HCT116 (cell line): ENCODE measurements at regions of chr6 and their contacts with region 1.

Region 1: GRCh38 chr6:121055572-121056163 is 278.6 kb downstream of the TBC1D32 start:
- DNase-seq: peak; percentile 10
- ATAC-seq: peak; percentile 87
- H3K4me3 ChIP-seq: no peak overlapping the region
- H3K27ac ChIP-seq: no peak overlapping the region
- H3K4me1 ChIP-seq: no peaks in the 10 kb centered on the region
- H3K27me3 ChIP-seq: no peaks in the 10 kb centered on the region
- CTCF ChIP-seq: peak; percentile 64 to 74 (median 66)
- POLR2A ChIP-seq: no peak
- RAD21 ChIP-seq: peak; percentile 80

Region 2: GRCh38 chr6:120764318-120764717 is 291.4 kb before region 1 on chr6:
- CTCF ChIA-PET with region 1: no interaction called
- POLR2A ChIA-PET with region 1: no interaction called
- RAD21 ChIA-PET with region 1: no interaction called
- intact Hi-C with region 1: no loop called
- DNase-seq: no peak
- ATAC-seq: peak; percentile 65
- H3K4me3 ChIP-seq: no peak overlapping the region
- H3K27ac ChIP-seq: no peak overlapping the region
- H3K4me1 ChIP-seq: no peaks in the 10 kb centered on the region
- H3K27me3 ChIP-seq: no peaks in the 10 kb centered on the region
- CTCF ChIP-seq: peak in 1 of 3 experiments; percentile 29; a peak in 2 of 6 replicates
- POLR2A ChIP-seq: no peak
- RAD21 ChIP-seq: peak; percentile 37

Region 3: GRCh38 chr6:121222656-121223055 is 167.0 kb after region 1 on chr6:
- CTCF ChIA-PET with region 1: no interaction called
- POLR2A ChIA-PET with region 1: no interaction called
- RAD21 ChIA-PET with region 1: no interaction called
- intact Hi-C with region 1: loop called (anchors 5 kb)
- DNase-seq: no peak
- ATAC-seq: no peak; the same call in 1 of the 2 replicates
- H3K4me3 ChIP-seq: no peak overlapping the region
- H3K27ac ChIP-seq: no peak overlapping the region
- H3K4me1 ChIP-seq: no peaks in the 10 kb centered on the region
- H3K27me3 ChIP-seq: no peaks in the 10 kb centered on the region
- CTCF ChIP-seq: peak in 1 of 3 experiments; percentile 49; a peak in 2 of 6 replicates
- POLR2A ChIP-seq: no peak
- RAD21 ChIP-seq: peak; percentile 33; the same call in 1 of the 2 replicates

Region 4: GRCh38 chr6:121399966-121400365 is 344.3 kb after region 1 on chr6:
- CTCF ChIA-PET with region 1: interaction called, 7 read pairs
- POLR2A ChIA-PET with region 1: no interaction called
- RAD21 ChIA-PET with region 1: no interaction called
- intact Hi-C with region 1: loop called (anchors 2 kb)
- DNase-seq: no peak
- ATAC-seq: no peak
- H3K4me3 ChIP-seq: no peak overlapping the region
- H3K27ac ChIP-seq: no peak overlapping the region
- H3K4me1 ChIP-seq: no peaks in the 10 kb centered on the region
- H3K27me3 ChIP-seq: no peaks in the 10 kb centered on the region
- CTCF ChIP-seq: no peak
- POLR2A ChIP-seq: no peak
- RAD21 ChIP-seq: no peak

Region 5: DNA sequence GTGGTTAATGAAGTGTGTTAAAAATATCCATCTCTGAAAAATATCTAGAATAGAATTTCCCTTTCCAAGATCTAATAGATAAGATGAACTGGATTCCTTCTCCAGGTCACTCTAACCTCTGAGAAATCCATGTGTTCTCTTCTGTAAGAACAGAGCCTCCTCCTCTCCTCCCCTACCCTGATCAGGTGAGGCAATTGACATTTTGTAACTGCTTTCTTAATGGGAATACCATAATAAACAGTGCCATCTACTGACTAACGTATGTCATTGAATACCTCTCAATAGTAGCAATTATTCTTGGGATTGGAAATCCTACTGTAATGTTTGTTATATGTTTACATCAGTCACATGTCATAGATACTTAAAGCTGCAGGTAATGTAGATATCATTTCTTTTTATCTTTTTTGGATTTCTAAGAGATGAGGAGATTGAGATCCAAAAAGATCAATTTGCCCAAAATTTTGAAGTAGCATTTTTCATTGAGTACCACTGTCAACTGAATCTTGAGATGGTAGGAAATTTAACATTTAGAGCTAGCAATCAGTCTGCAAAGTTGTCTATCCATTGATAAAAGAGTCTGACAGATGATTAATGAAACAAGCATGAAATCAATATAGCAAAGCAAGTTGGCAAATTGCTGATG is 978.0 kb after region 1 on chr6:
- CTCF ChIA-PET with region 1: no interaction called
- POLR2A ChIA-PET with region 1: no interaction called
- RAD21 ChIA-PET with region 1: no interaction called
- intact Hi-C with region 1: loop called (anchors 10 kb)
- DNase-seq: peak; percentile 49
- ATAC-seq: peak; percentile 91
- H3K4me3 ChIP-seq: no peak overlapping the region
- H3K27ac ChIP-seq: no peak overlapping the region
- H3K4me1 ChIP-seq: peaks cover 3 to 13% of the 10 kb centered on the region in 2 experiments; a peak in 3 of 4 replicates
- H3K27me3 ChIP-seq: no peaks in the 10 kb centered on the region
- CTCF ChIP-seq: peak; percentile 42 to 80 (median 60); a peak in 4 of 6 replicates
- POLR2A ChIP-seq: no peak
- RAD21 ChIP-seq: peak; percentile 89

Region 6: GRCh38 chr6:122372647-122373046 is 1317.0 kb after region 1 on chr6:
- CTCF ChIA-PET with region 1: no interaction called
- POLR2A ChIA-PET with region 1: no interaction called
- RAD21 ChIA-PET with region 1: no interaction called
- intact Hi-C with region 1: loop called (anchors 10 kb)
- DNase-seq: no peak
- ATAC-seq: peak; percentile 61; the same call in 1 of the 2 replicates
- H3K4me3 ChIP-seq: no peak overlapping the region
- H3K27ac ChIP-seq: no peak overlapping the region
- H3K4me1 ChIP-seq: no peaks in the 10 kb centered on the region
- H3K27me3 ChIP-seq: no peaks in the 10 kb centered on the region
- CTCF ChIP-seq: peak; percentile 23 to 57 (median 31); a peak in 4 of 6 replicates
- POLR2A ChIP-seq: no peak
- RAD21 ChIP-seq: peak; percentile 69